H1 (cell line): ENCODE measurements at regions of chr9 and their contacts with region 1.

Region 1: DNA sequence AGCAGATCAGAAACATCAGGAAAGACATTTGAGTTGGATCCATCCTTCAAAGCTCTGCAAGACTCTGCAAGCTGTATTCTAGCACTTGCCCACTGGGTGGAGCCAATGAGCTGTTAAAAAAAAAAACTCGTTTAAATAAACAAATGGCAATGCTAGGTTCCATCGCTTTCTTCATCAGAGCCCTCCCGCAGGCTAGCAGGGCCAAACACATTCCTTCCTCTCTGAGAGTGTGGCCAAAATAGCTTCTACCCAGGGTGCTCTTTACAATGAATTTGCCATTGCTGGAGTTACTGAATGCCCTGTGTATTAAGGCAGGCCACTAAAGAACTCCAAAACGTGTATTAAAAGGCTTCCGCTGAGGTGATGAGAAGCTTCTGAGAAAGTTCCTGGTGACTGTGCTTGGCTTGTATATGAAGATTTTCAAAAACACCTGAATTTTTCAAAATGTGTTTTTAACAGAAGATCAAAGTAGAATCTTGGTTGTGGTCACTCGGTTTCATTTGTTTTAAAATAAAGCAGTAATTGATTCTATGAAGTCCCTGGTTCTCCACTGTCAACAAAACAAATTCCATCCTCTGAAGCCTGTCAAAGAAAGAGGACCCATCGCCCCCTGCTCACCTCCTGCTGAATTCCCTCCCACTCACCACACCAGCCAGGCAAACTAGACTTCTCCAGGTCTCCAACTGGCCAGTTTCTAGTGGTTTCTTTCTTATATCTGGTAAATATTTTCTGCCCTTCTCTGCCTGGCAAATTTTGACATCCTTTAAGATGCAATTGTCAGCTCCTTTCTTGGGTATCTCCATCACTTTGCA is 36.5 kb upstream of the EQTN start:
- DNase-seq: peak; percentile 82 to 84
- H3K4me3 ChIP-seq: peak overlapping the region in 1 of 4 experiments; percentile 20; a peak in 1 of 8 replicates
- H3K27ac ChIP-seq: no peak overlapping the region
- H3K4me1 ChIP-seq: peaks cover 0 to 9% (median 5%) of the 10 kb centered on the region in 4 experiments; a peak in 5 of 7 replicates
- H3K27me3 ChIP-seq: no peaks in the 10 kb centered on the region
- CTCF ChIP-seq: peak in 2 of 3 experiments; percentile 71 to 77; a peak in 3 of 4 replicates
- EP300 ChIP-seq: no peak
- POLR2A ChIP-seq: no peak
- RAD21 ChIP-seq: peak; percentile 88 to 94

Region 2: DNA sequence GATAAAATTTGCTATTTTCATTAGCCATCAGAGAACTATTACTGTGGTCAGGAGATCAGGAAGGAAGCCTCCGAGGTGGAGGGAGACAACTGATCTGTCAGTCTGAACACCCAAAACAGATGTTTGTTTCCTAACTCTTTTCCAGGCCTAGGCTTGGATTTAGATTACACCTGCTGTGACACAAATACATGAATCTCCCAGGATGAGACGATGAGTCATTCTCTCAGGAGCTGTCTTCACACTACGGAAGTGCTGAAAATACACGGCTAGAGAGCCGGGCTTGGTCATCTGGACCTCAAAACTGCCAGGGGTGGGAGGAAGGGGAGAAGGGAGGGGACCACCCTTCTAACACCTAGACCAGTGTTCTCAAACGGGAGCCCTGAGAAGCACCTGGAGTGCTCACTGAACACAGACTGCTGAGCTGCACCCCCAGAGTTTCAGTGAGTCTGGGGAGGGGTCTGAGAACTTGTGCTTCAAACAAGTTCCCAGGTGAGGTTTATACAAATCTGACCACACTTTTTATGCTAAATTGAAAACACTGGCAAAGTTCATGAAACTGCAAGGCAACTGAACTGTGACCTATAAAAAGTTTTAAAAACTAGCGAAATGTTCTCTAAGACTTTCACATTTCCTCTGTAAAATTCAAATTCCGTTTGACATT is 43.8 kb after region 1 on chr9:
- CTCF ChIA-PET with region 1: no interaction called
- POLR2A ChIA-PET with region 1: no interaction called
- DNase-seq: no peak
- H3K4me3 ChIP-seq: no peak overlapping the region
- H3K27ac ChIP-seq: peak overlapping the region; percentile 13; the same call in 1 of the 2 replicates
- H3K4me1 ChIP-seq: peaks cover 0 to 5% (median 0%) of the 10 kb centered on the region in 4 experiments; a peak in 3 of 7 replicates
- H3K27me3 ChIP-seq: no peaks in the 10 kb centered on the region
- CTCF ChIP-seq: no peak
- EP300 ChIP-seq: no peak
- POLR2A ChIP-seq: no peak
- RAD21 ChIP-seq: no peak

Region 3: GRCh38 chr9:27489087-27489876 is 155.8 kb after region 1 on chr9:
- CTCF ChIA-PET with region 1: interaction called, 19 read pairs
- POLR2A ChIA-PET with region 1: no interaction called
- DNase-seq: no peak
- H3K4me3 ChIP-seq: peak overlapping the region in 2 of 4 experiments; percentile 2 to 28; a peak in 2 of 8 replicates
- H3K27ac ChIP-seq: peak overlapping the region; percentile 50; the same call in 1 of the 2 replicates
- H3K4me1 ChIP-seq: peaks cover 11 to 27% (median 18%) of the 10 kb centered on the region in 4 experiments; a peak in 6 of 7 replicates
- H3K27me3 ChIP-seq: no peaks in the 10 kb centered on the region
- CTCF ChIP-seq: peak in 1 of 3 experiments; percentile 3; a peak in 2 of 4 replicates
- EP300 ChIP-seq: no peak
- POLR2A ChIP-seq: no peak
- RAD21 ChIP-seq: peak; percentile 30 to 32; a peak in 2 of 4 replicates

Region 4: DNA sequence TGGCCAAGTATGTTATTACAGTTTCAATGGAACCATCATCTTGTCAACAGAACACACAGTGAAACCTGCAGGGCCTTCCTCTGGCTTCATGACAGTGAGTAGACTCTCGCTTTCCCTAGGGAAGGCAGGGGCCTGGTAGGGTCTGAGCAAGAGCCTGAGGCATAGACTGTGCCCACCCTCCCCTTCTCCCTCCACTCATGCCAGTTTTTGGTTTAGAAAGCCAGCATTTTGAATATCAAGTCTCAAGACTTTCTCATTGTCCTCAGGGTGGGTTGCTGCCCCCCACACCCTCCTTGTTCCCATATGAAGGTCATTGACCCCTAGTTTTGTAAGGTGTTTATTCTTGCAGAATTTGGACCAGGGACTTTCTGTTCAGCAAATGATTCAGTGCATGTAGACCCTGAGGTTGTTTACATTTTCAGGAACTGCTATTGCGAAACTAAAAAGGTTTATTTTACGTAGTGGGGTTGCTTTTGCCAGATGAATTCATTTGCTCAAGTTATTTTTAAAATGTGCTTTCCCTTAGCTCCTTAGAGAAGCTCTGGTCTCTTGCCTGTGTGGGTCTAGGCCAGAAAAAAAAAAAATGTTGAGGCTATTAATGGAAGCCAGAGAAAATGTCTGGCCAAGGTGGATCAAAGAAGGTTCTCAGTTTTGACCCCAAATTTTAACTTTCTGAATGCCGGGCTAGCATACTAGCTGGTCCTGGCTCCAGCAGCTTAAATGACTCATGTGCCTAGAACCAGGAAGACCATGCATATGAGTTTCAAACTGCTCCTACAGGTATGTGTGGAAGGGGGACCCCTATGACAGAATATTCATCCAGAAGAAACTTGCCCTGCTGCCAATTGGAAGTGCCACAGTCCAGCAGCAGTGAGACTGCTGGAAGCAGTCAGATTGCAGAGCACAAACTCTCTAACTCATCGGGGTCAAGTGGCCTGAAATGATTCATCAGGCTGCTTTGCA is 206.3 kb after region 1 on chr9:
- CTCF ChIA-PET with region 1: interaction called, 63 read pairs
- POLR2A ChIA-PET with region 1: interaction called, 6 read pairs
- DNase-seq: no peak
- H3K4me3 ChIP-seq: no peak overlapping the region
- H3K27ac ChIP-seq: no peak overlapping the region
- H3K4me1 ChIP-seq: peaks cover 0 to 5% (median 0%) of the 10 kb centered on the region in 4 experiments; a peak in 2 of 7 replicates
- H3K27me3 ChIP-seq: no peaks in the 10 kb centered on the region
- CTCF ChIP-seq: no peak
- EP300 ChIP-seq: no peak
- POLR2A ChIP-seq: no peak
- RAD21 ChIP-seq: no peak

Region 5: DNA sequence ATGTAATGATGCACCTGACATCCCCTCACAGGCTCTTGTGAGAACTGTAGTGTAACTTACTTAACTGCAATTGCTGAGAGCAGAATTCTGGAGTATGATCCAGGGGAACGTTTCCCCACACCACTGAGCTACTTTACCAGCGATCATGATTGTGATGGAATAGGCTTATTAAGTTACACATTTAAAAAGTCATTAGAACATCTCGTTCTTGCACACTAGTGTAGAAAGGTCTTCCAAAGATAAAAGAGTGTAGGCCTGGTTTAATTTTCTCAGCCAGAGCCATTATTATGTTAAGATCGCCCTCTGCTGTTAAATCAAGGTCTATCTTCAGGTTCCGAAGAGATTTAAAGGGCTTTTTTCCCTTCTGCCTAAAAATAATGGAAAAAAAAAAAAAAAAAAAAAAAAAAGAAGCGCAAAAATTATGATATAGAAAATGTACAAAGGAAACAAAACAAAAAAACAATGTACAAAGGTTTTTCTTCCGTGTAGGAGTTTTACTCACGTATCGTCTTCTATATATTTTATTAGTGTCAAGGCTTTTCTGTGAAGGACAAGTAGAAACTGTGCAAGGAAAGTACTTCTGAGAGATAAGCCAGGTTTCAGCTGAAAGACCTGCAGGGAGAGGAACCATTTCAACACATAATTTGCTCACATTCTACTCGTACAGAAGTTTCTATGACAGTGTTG is 214.8 kb after region 1 on chr9:
- CTCF ChIA-PET with region 1: interaction called, 63 read pairs
- POLR2A ChIA-PET with region 1: no interaction called
- DNase-seq: no peak
- H3K4me3 ChIP-seq: no peak overlapping the region
- H3K27ac ChIP-seq: no peak overlapping the region
- H3K4me1 ChIP-seq: peaks cover 0 to 4% (median 0%) of the 10 kb centered on the region in 4 experiments; a peak in 1 of 7 replicates
- H3K27me3 ChIP-seq: no peaks in the 10 kb centered on the region
- CTCF ChIP-seq: peak in 2 of 3 experiments; percentile 23 to 37; a peak in 2 of 4 replicates
- EP300 ChIP-seq: no peak
- POLR2A ChIP-seq: no peak
- RAD21 ChIP-seq: peak; percentile 73 to 75